Breast epithelium (tissue), 4 donors: ENCODE measurements at regions of chr13 and their contacts with region 1.

Region 1: GRCh38 chr13:33519561-33520467 is 234.3 kb upstream of the STARD13 start:
- DNase-seq: peak in 1 of 2 donors; percentile 49
- H3K4me3 ChIP-seq: no peak overlapping the region
- H3K27ac ChIP-seq: peak overlapping the region; percentile 3 to 19
- H3K4me1 ChIP-seq: peaks cover 0 to 4% of the 10 kb centered on the region in 2 donors
- H3K27me3 ChIP-seq: no peaks in the 10 kb centered on the region
- CTCF ChIP-seq: no peak
- POLR2A ChIP-seq: no peak

Region 2: GRCh38 chr13:32932376-32932775 is 587.4 kb before region 1 on chr13:
- intact Hi-C with region 1: no loop called
- DNase-seq: no peak
- H3K4me3 ChIP-seq: no peak overlapping the region
- H3K27ac ChIP-seq: no peak overlapping the region
- H3K4me1 ChIP-seq: no peaks in the 10 kb centered on the region
- H3K27me3 ChIP-seq: no peaks in the 10 kb centered on the region
- CTCF ChIP-seq: no peak
- POLR2A ChIP-seq: no peak

Region 3: DNA sequence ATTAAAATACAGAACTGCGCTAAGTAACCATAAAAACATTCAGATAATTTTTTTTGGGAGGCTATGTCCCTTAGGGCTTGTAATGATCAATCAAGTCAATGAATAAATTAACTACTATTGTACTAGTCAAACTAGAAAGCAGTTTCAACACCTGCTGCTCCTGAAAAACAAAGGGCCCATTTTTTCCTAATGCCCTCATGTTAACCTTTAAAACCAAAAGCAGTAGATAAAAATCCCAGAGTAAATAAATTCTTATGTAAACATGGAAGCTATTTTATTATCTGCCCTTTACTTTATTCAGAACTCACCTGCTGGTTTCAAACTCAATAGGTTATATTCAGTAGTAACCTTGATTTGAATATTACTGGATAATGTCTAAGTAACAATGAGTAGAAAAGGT is 74.8 kb before region 1 on chr13:
- intact Hi-C with region 1: loop called (anchors 2 kb)
- DNase-seq: no peak
- H3K4me3 ChIP-seq: no peak overlapping the region
- H3K27ac ChIP-seq: no peak overlapping the region
- H3K4me1 ChIP-seq: no peaks in the 10 kb centered on the region
- H3K27me3 ChIP-seq: no peaks in the 10 kb centered on the region
- CTCF ChIP-seq: no peak
- POLR2A ChIP-seq: no peak